ENCODE measurements at regions of chr11 and their contacts with region 1.

Region 1: DNA sequence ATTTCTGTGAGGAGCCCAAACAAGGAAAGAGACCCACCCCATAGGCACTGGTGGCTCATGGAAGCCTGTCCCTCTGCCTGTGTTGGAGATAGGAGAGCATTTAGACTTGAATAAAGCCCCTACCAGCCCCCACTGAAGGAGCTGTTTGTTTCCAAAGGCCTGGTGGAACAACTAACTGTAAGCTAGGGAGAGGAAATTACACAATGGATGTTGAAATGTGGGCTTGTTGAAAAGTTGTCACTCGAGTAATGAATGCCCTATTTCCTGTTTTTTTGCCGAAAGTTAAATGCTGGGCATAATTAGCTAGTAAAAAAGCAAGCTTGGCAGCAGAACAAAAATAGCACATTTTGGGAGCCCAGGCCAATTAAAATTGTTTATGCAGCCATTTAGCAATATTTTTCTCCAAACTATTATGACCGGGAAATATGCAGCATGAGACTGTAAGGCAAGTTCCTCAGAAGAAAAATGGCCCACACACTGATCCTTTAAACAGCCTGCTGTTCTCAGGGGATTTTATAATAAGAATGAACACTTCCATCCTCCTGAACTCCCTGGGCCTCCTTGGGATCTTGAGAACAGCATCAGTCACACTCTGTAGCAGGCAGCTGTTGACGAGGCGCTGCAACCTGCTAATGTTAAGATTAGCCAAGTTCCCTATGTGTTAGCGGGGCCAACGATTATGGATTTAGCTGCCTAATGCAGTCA is 38.6 kb upstream of the LMO2 start:
- DNase-seq: no peak
- H3K4me3 ChIP-seq: no peak overlapping the region
- CTCF ChIP-seq: no peak

Region 2: GRCh38 chr11:33847251-33847650 is 83.2 kb before region 1 on chr11:
- in situ Hi-C with region 1: loop called (anchors 5 kb)
- DNase-seq: no peak
- H3K4me3 ChIP-seq: no peak overlapping the region
- CTCF ChIP-seq: no peak

Region 3: DNA sequence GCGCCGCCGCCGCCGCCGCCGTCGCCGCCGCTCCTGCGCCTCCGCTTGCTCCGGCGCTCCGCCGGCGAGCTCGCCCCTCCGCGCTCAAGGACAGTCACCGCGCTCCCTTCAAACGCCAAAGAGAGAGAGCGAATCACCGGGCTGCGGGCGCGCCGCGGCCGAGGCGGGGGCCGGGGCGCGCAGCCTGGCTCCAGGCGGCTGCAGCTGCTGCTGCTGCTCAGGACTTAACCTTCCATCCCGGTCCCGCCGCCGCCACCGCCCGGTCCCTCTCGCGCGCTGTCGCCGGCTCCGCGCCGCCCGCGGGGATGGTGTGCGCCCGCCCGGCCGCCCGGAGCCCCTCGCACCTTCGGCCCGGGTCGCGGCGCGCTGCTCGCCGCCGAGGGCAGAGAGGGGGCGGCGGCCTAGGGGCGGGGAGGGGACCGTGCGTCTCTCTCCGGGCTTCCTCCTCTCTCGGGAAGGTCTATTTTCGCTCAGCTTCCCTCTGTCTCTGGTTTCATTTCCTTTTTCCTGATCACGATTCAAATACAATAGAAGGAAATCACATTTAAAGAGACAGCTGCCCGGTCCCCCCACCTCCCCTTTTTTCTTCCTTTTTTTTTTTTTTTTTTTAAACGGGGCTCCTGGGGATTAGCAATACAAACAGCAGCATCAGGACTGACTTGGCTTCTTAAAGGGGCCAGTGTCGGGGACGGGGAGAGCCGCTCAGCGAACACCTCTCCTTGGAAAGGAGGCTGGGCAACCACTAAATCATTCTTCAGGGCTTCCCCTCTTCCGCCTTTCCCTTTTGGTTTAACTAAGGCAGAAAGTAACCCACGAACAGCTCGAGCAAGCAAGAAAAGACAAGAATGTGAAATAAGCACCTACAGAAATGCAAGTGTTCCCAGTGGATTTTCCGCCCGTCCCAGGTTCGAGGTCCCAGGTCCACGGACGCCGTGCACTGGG is 60.7 kb before region 1 on chr11:
- in situ Hi-C with region 1: no loop called
- DNase-seq: no peak
- H3K4me3 ChIP-seq: peak overlapping the region; percentile 54
- CTCF ChIP-seq: no peak

Region 4: GRCh38 chr11:33976495-33977199 is 46.2 kb after region 1 on chr11:
- in situ Hi-C with region 1: no loop called
- DNase-seq: no peak
- H3K4me3 ChIP-seq: no peak overlapping the region
- CTCF ChIP-seq: no peak

Region 5: DNA sequence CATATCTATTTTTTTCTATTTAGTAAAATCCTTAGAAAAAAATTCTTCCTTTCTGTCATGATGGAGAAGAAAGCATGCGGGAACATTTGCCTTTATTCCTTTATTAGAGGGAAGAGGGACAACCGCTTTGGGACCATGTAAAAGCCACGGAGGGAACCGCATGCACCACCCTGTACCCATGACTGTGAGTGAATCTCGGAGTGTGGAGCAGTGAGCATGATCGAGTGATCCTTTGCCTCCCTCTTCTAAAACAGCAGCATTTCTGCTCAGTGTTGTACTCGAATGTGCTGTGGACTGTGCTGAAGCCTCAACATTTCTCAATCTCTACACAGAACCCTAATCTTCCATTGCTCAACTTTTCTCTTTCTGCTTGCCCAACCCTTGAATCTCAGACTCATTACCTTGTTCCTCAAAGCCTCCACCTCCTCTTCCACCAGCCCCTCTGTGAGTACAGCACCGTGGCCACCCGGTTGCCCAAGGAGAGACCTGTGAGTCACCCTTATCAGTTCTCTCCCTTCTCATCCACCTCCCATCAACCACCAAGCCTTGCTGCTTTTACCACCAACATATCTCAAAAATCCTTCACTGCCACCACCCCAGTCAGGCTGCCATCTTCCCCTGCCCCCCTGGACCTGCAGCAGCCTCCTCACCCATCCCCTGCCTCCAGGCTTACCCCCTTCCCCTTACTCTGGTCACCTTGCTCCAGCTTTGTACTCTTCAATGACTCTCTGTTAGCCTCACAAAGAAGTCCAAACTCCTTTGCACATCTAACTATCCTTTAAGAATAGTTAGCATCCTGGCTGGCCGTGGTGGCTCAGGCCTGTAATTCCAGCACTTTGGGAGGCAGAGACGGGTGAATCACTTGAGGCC is 278.0 kb after region 1 on chr11:
- in situ Hi-C with region 1: no loop called
- DNase-seq: no peak
- H3K4me3 ChIP-seq: no peak overlapping the region
- CTCF ChIP-seq: no peak